ENCODE measurements at regions of chr12 and their contacts with region 1.

Region 1: DNA sequence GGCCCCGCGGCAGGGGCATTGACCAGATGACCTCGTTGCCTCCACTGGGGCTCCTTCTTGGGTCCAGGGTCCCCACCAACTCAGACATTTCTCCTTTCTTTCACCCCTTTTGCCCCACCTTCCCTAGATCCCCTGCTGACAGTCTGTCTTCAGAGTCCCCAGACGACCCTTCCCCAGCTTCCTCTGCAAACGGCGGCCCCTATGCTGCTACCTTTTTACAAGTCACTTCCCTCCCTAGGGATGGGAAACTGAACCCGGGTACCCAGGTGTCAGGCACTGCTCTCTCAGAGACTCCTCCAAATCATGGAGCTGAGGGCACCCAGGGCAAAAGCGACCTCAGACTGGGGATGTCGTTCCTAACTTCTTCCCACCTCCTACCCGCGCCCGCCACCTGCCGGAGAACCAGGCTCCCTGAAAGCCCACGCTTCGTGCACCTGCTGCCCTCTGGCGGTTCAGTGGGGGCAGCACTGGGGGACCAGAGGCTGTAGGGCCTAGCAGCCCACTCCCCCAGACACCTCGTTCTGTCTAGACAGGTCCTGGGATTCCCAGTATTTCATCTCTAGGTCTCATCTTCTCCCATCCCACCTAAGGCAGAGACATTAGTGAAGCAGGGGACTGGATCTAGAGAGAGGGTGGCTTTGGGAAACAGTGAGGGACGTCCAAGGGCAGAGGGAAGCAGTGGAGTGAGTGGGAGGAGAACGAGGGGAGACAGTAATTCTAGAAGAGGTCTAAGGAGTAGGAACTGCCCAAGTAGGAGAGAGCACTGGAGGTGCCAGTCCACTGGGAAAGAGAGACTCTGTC is 4.9 kb downstream of the ZNF385A start:
- DNase-seq: peak; percentile 83 to 89 (median 85)
- H3K4me3 ChIP-seq: peak overlapping the region in 3 of 7 experiments; percentile 26 to 39 (median 34)
- H3K27ac ChIP-seq: no peak overlapping the region
- H3K4me1 ChIP-seq: peaks cover 0 to 22% (median 17%) of the 10 kb centered on the region in 4 experiments
- H3K27me3 ChIP-seq: no peaks in the 10 kb centered on the region

Region 2: GRCh38 chr12:54251667-54252284 is 127.8 kb before region 1 on chr12:
- CTCF ChIA-PET with region 1: interaction called, 13 read pairs
- POLR2A ChIA-PET with region 1: no interaction called
- DNase-seq: peak; percentile 62 to 82 (median 79)
- H3K4me3 ChIP-seq: no peak overlapping the region
- H3K27ac ChIP-seq: no peak overlapping the region
- H3K4me1 ChIP-seq: no peaks in the 10 kb centered on the region
- H3K27me3 ChIP-seq: no peaks in the 10 kb centered on the region

Region 3: GRCh38 chr12:54337280-54337842 is 42.2 kb before region 1 on chr12:
- CTCF ChIA-PET with region 1: interaction called, 160 read pairs
- POLR2A ChIA-PET with region 1: no interaction called
- DNase-seq: peak in 2 of 3 donors; percentile 59 to 68
- H3K4me3 ChIP-seq: no peak overlapping the region
- H3K27ac ChIP-seq: peak overlapping the region in 1 of 2 experiments; percentile 64
- H3K4me1 ChIP-seq: peaks cover 0 to 16% (median 6%) of the 10 kb centered on the region in 4 experiments
- H3K27me3 ChIP-seq: no peaks in the 10 kb centered on the region

Region 4: DNA sequence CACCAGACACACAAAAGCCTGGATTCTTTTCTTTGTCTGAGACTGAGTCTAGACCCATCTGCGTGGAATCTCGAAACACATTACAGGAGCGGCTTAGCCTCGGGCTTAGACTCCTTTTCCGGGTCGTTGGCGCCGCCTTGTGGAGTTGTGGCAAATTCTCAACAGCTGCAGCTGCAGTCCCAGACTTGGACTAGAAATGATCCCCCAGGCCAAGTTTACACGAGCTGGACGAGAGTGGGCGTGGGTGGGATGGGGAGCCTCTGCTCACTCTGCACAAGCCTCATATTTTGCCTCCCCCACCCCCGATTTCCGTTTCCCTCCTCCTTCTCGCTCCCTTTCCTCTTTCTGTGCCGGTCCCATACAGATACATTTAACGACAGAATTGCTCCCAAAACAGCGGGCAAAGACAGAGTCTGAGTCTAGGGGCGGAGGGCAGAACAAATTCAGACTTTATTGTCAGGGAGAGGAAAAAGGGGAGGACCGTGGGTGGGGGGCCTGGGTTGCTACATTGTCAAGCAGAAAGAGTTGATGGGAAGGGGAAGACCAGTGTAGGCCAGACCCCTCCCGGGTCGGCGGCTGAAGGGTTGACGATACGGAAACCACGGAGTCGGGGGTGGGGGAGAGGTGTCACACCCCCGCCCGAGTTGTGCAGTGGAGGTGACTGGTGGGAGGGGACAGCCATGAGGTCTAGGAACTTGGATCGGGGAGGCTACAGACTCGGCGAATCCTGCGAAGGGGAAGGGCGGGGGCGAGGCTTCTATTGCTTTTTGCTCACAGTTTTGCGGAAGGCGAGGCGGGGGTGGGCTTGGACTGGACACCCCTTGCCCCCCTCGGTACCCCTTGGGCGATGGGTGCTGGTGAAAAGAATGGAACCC is 10.7 kb before region 1 on chr12:
- CTCF ChIA-PET with region 1: interaction called, 43 read pairs
- POLR2A ChIA-PET with region 1: no interaction called
- DNase-seq: peak; percentile 83 to 91 (median 87)
- H3K4me3 ChIP-seq: peak overlapping the region in 4 of 7 experiments; percentile 48 to 67 (median 51)
- H3K27ac ChIP-seq: peak overlapping the region in 1 of 2 experiments; percentile 25
- H3K4me1 ChIP-seq: peaks cover 15 to 51% (median 40%) of the 10 kb centered on the region in 4 experiments
- H3K27me3 ChIP-seq: no peaks in the 10 kb centered on the region

Region 5: DNA sequence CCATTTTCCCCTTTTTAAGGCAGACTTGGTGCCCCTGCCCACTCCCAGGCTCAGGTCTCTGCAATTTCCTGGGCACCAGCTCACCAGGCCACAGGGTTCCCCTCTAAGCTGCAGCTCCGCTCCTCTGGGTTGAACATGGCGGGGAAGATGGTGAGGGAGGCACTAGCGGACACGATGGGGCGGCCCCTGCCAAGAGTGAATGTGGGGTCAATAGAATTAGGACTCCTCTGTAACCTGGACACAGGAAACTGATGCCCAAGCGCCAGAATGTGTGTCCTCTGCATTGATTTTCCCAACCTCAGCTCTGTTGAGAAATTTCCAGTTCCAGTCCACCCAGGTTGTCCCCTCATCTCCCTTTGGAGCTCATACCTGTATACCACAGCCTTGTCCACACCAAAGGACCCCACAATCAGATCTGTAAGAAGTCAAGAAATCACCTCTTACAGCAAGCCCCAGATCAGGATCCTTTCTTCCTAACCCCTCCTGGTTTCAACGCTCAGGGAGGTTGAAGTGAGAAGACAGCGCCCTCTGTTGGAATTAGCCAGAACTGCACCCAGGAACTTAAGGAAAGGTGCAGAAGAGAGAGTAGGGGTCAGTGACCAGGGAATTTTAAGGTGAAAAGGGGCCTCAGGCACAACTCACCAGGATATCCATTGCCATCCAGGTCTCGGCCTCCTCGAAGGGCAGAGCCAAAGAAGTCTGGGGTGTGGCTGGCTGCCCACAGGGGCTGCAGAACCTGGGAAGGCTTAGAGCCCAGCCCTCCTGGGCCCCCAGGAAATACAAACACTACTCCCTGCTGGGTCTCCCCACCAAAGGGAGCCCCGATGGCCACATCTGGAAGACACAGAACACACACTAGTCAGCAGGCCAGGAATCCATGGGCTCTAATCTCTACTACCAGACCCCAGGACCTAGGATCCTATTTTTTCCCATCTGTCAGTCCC is 24.7 kb after region 1 on chr12:
- CTCF ChIA-PET with region 1: interaction called, 28 read pairs
- POLR2A ChIA-PET with region 1: no interaction called
- DNase-seq: peak; percentile 68 to 78 (median 72)
- H3K4me3 ChIP-seq: no peak overlapping the region
- H3K27ac ChIP-seq: peak overlapping the region in 1 of 2 experiments; percentile 43
- H3K4me1 ChIP-seq: peaks cover 0 to 21% (median 11%) of the 10 kb centered on the region in 4 experiments
- H3K27me3 ChIP-seq: no peaks in the 10 kb centered on the region

Region 6: GRCh38 chr12:54439521-54440255 is 60.1 kb after region 1 on chr12:
- CTCF ChIA-PET with region 1: interaction called, 14 read pairs
- POLR2A ChIA-PET with region 1: interaction called, 3 read pairs
- DNase-seq: peak; percentile 62 to 72 (median 66)
- H3K4me3 ChIP-seq: no peak overlapping the region
- H3K27ac ChIP-seq: no peak overlapping the region
- H3K4me1 ChIP-seq: peaks cover 0 to 13% (median 6%) of the 10 kb centered on the region in 4 experiments
- H3K27me3 ChIP-seq: no peaks in the 10 kb centered on the region

Region 7: DNA sequence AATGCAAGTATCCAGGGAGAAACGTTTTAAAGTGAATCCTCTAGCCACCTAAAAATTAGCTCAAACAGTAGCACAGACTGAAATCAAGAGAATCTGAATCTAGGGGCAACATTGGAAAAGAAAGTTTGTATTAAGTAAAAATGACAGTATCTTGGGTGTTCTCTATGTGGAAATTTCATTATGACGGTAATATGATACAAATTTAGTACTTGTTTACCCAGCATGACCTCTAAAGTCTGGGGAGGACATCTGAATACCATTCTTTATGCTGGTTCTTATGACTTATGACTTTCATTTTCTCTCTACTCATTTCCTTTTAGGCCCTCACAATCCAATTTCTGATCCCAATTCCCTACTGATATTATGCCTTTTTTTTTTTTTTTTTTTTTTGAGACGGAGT is 79.8 kb after region 1 on chr12:
- CTCF ChIA-PET with region 1: no interaction called
- POLR2A ChIA-PET with region 1: no interaction called
- DNase-seq: no peak
- H3K4me3 ChIP-seq: no peak overlapping the region
- H3K27ac ChIP-seq: no peak overlapping the region
- H3K4me1 ChIP-seq: no peaks in the 10 kb centered on the region
- H3K27me3 ChIP-seq: no peaks in the 10 kb centered on the region